AG04449 (cell line): ENCODE measurements at regions of chr3 and their contacts with region 1.

Region 1: GRCh38 chr3:38496131-38496910 is at the start of gene EXOG:
- DNase-seq: peak; percentile 42
- H3K4me3 ChIP-seq: peak within 1 kb of the TSS; percentile 86
- CTCF ChIP-seq: peak; percentile 90

Region 2: DNA sequence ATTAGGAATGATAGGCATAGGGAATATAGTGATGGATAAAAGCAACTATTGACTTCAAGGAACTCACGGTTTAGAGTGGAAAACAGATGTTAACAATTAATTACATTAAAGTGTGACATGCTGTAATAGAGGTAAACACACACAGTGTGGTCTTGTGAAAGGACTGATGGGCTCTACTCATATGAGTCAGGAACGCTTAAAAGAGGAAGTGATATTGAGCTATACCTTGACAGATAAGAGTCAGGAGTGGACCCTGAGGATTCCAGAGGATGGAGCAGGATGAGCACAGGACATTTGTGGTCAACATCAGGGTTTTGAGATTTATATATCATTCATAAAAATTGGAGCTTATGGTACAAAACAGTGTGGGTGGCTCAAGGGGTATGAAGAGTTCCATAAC is 10.8 kb after region 1 on chr3:
- CTCF ChIA-PET with region 1: interaction called, 13 read pairs
- POLR2A ChIA-PET with region 1: no interaction called
- DNase-seq: no peak
- H3K4me3 ChIP-seq: no peak overlapping the region
- CTCF ChIP-seq: no peak

Region 3: DNA sequence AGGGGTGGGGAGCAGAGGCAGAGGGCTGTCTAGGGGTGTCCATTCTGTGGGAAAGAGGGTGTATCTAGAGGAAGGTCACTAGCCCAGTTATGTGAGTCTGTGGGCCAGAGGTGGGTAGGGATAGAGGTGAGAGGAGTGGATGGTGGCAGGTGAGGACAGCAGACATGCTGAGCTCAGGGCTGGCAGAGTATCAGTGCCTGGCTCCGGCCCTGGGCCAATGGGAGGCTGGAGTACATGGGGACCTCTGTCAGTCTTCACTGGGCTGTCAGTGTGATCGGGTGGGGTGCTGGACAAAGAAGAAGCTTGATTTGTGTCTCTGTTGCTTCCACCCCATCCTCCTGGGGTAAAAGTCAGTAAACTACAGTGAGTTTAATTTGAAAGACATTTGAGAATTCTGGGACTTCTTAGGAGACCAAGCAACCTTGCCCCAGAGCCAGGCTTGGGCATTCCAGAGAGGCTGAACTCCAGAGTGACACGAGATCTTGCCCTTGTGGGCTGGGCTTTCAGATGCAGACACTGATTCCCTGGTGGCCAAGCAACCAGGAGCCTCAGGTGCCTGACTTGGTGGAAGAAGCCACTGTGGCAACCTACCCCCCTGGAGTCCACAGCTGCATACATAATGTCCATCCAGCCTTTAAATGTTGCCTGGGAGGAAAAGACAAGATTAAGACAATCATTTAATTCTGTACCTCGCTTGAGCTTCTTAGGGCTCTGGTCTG is 60.5 kb after region 1 on chr3:
- CTCF ChIA-PET with region 1: no interaction called
- POLR2A ChIA-PET with region 1: no interaction called
- DNase-seq: no peak
- H3K4me3 ChIP-seq: no peak overlapping the region
- CTCF ChIP-seq: no peak

Region 4: GRCh38 chr3:38843898-38844297 is 347.6 kb after region 1 on chr3:
- CTCF ChIA-PET with region 1: interaction called, 10 read pairs
- POLR2A ChIA-PET with region 1: no interaction called
- DNase-seq: no peak
- H3K4me3 ChIP-seq: no peak overlapping the region
- CTCF ChIP-seq: peak; percentile 61